B cell (primary cell): ENCODE measurements at regions of chr10 and their contacts with region 1.

Region 1: DNA sequence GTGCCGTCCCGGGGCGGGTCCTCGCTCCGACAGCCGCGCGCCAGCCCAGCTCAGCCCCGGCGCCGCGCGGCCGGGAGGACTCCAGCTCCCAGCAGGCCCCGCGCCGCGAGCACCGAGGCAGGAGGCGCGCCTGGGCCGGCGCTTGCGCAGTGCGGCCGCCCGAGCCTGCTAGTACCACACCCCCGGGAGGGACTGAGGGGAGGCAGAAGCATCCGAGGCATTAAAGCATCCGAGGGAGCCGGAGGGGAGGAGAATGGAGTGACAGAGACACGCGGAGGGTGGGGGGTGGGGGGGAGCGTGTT is at the start of gene GRK5:
- DNase-seq: peak; percentile 98
- ATAC-seq: peak; percentile 83
- H3K4me3 ChIP-seq: peak within 1 kb of the TSS; percentile 44 to 94 (median 74)
- H3K4me3 Mint-ChIP-seq: peak within 1 kb of the TSS; percentile 95
- H3K27ac ChIP-seq: peak within 1 kb of the TSS; percentile 73 to 83
- H3K27ac Mint-ChIP-seq: peak within 1 kb of the TSS; percentile 95
- H3K4me1 ChIP-seq: peaks cover 27 to 38% of the 10 kb centered on the region in 2 donors
- H3K4me1 Mint-ChIP-seq: peaks cover 43% of the 10 kb centered on the region
- H3K27me3 ChIP-seq: no peaks in the 10 kb centered on the region
- H3K27me3 Mint-ChIP-seq: no peaks in the 10 kb centered on the region
- CTCF ChIP-seq: no peak
- total RNA-seq, gene GRK5: 54.8 and 57.2 TPM in 2 replicates

Region 2: DNA sequence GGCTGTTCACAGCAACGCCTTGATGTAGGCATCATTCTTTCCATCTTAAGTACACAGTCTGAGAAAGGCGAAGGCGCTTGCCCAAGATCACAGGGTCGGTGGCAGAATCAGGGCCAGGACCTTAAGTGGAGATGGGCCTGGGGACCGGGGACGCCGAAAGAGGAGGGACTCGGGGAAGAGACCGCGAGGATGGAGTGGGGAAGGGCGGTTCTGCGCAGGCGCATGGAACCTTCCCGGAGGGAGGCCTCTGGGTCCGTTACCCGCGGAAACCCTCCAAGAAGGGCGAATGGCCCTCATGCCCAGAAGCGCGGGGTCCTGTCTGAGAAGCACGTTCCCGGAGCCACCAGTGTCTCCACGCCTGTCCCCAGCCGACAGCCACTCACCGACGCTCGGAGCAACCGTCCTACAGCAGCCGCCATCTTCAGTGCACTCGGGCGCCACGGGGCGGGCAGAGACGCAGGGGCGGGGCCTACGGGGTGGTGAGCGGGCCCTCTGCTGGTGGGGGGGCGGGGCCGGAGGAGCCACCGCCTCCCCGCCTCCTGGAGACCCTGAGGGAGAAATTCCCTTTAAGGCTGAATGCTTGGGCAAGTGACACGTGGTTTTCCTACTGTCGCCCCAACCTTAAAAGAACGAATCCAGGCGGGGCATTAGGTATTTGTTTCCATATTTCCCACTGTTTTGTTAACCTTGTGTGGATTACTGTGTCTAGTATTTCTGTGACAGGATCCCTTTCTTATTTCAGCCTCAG is 28.8 kb before region 1 on chr10 and contains the start of gene PRDX3:
- CTCF ChIA-PET with region 1: interaction called, 6 read pairs
- POLR2A ChIA-PET with region 1: no interaction called
- intact Hi-C with region 1: loop called (anchors 1 kb)
- DNase-seq: peak; percentile 92
- ATAC-seq: peak; percentile 99
- H3K4me3 ChIP-seq: peak within 1 kb of the TSS; percentile 88 to 98 (median 89)
- H3K4me3 Mint-ChIP-seq: peak within 1 kb of the TSS; percentile 94
- H3K27ac ChIP-seq: peak within 1 kb of the TSS; percentile 68 to 71
- H3K27ac Mint-ChIP-seq: peak within 1 kb of the TSS; percentile 90
- H3K4me1 ChIP-seq: peaks cover 11 to 15% of the 10 kb centered on the region in 2 donors
- H3K4me1 Mint-ChIP-seq: peaks cover 28% of the 10 kb centered on the region
- H3K27me3 ChIP-seq: no peaks in the 10 kb centered on the region
- H3K27me3 Mint-ChIP-seq: no peaks in the 10 kb centered on the region
- CTCF ChIP-seq: peak; percentile 29
- total RNA-seq, gene PRDX3: 36.2 and 36.3 TPM in 2 replicates

Region 3: GRCh38 chr10:119270762-119271366 is 63.5 kb after region 1 on chr10:
- CTCF ChIA-PET with region 1: interaction called, 23 read pairs
- POLR2A ChIA-PET with region 1: interaction called, 4 read pairs
- intact Hi-C with region 1: loop called (anchors 1 kb)
- DNase-seq: peak; percentile 77
- ATAC-seq: peak; percentile 39
- H3K4me3 ChIP-seq: peak overlapping the region in 4 of 5 experiments; percentile 15 to 42 (median 31)
- H3K4me3 Mint-ChIP-seq: peak overlapping the region; percentile 73
- H3K27ac ChIP-seq: peak overlapping the region; percentile 98 to 99
- H3K27ac Mint-ChIP-seq: peak overlapping the region; percentile 97
- H3K4me1 ChIP-seq: peaks cover 54 to 78% of the 10 kb centered on the region in 2 donors
- H3K4me1 Mint-ChIP-seq: peaks cover 76% of the 10 kb centered on the region
- H3K27me3 ChIP-seq: no peaks in the 10 kb centered on the region
- H3K27me3 Mint-ChIP-seq: no peaks in the 10 kb centered on the region
- CTCF ChIP-seq: no peak

Region 4: DNA sequence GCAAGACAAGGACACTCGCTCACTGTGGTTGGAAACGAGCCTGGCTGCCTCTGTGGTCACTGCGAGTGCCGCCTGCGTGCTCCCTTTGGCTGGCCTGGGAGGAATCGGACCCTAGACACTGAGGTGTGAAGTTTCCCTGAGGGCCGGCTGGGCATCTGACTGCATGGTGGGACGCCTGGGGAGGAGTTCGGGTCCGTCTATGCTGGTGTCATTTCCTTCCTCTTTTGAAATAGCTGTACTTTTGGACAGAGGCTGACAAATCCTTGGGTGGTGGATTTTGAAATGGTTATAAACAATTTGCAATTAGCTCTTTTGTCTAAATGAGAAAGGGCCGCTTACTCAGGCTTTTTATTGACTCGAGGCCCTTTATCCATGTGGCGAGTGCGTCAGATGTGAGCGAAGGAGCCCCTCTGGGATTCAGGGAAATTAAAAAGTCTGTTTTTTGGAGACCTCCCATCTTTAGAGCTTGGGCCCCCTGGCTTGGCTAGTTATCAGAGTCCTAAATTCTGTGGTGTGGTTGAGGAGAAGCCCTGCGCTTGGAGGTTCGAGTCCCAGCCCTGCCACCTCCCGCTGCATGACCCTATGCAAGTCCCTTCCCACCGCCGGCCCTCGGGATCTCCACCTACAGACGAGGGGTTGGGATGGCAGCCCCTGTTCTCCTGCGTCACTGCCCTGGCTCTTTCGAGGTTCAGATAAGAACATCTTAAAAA is 188.1 kb after region 1 on chr10:
- CTCF ChIA-PET with region 1: interaction called, 15 read pairs
- POLR2A ChIA-PET with region 1: interaction called, 7 read pairs
- intact Hi-C with region 1: no loop called
- DNase-seq: peak; percentile 75
- ATAC-seq: peak; percentile 83
- H3K4me3 ChIP-seq: no peak overlapping the region
- H3K4me3 Mint-ChIP-seq: peak overlapping the region; percentile 83
- H3K27ac ChIP-seq: peak overlapping the region; percentile 65 to 91
- H3K27ac Mint-ChIP-seq: peak overlapping the region; percentile 96
- H3K4me1 ChIP-seq: peaks cover 37% of the 10 kb centered on the region in 2 donors
- H3K4me1 Mint-ChIP-seq: peaks cover 46% of the 10 kb centered on the region
- H3K27me3 ChIP-seq: no peaks in the 10 kb centered on the region
- H3K27me3 Mint-ChIP-seq: no peaks in the 10 kb centered on the region
- CTCF ChIP-seq: no peak

Region 5: DNA sequence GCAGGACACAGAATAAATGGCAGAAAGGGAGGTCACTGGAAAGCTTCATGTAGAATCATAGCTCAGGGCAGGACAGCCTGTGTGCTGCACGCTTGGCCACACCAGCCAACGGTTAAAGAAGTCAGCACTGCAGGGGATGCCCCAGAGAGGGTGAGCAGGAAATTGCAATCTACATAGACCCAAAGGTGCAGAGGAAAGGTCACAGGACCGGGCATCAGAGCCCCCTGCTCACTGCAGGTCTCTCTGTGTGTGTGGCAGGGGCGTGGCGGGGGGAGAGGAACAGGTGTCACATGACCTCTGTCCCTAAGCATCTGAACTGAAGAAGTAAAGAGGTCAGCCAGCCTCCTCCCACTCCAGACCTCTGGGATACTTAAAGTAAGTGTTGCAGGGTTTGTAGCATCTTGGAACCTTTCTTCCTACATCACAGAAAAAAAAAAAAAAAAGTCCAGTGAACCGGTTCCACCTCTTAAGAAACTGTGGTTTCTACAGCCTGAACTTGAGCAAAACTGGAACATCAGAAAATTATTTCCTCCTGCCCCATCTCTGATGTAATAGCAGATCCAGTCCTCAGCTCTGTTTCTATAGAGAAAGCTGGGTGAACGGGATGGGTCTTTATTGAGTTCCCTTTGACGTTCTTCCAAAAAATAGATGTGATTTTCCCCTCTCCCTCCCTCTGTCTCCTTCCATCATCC is 270.9 kb after region 1 on chr10:
- CTCF ChIA-PET with region 1: interaction called, 8 read pairs
- POLR2A ChIA-PET with region 1: interaction called, 3 read pairs
- intact Hi-C with region 1: loop called (anchors 1 kb)
- DNase-seq: peak; percentile 77
- ATAC-seq: peak; percentile 95
- H3K4me3 ChIP-seq: peak overlapping the region in 2 of 5 experiments; percentile 5 to 42
- H3K4me3 Mint-ChIP-seq: peak overlapping the region; percentile 87
- H3K27ac ChIP-seq: peak overlapping the region; percentile 47 to 62
- H3K27ac Mint-ChIP-seq: peak overlapping the region; percentile 81
- H3K4me1 ChIP-seq: peaks cover 27 to 31% of the 10 kb centered on the region in 2 donors
- H3K4me1 Mint-ChIP-seq: peaks cover 37% of the 10 kb centered on the region
- H3K27me3 ChIP-seq: no peaks in the 10 kb centered on the region
- H3K27me3 Mint-ChIP-seq: no peaks in the 10 kb centered on the region
- CTCF ChIP-seq: no peak

Region 6: GRCh38 chr10:119859420-119860258 is 652.3 kb after region 1 on chr10:
- CTCF ChIA-PET with region 1: no interaction called
- POLR2A ChIA-PET with region 1: no interaction called
- intact Hi-C with region 1: loop called (anchors 5 kb)
- DNase-seq: peak; percentile 71
- ATAC-seq: peak; percentile 58
- H3K4me3 ChIP-seq: no peak overlapping the region
- H3K4me3 Mint-ChIP-seq: no peak overlapping the region
- H3K27ac ChIP-seq: peak overlapping the region in 1 of 2 donors; percentile 47
- H3K27ac Mint-ChIP-seq: no peak overlapping the region
- H3K4me1 ChIP-seq: peaks cover 3 to 7% of the 10 kb centered on the region in 2 donors
- H3K4me1 Mint-ChIP-seq: peaks cover 26% of the 10 kb centered on the region
- H3K27me3 ChIP-seq: no peaks in the 10 kb centered on the region
- H3K27me3 Mint-ChIP-seq: no peaks in the 10 kb centered on the region
- CTCF ChIP-seq: peak; percentile 83